Sciatic nerve (tissue), 2 donors: ENCODE measurements at regions of chr17 and their contacts with region 1.

Region 1: DNA sequence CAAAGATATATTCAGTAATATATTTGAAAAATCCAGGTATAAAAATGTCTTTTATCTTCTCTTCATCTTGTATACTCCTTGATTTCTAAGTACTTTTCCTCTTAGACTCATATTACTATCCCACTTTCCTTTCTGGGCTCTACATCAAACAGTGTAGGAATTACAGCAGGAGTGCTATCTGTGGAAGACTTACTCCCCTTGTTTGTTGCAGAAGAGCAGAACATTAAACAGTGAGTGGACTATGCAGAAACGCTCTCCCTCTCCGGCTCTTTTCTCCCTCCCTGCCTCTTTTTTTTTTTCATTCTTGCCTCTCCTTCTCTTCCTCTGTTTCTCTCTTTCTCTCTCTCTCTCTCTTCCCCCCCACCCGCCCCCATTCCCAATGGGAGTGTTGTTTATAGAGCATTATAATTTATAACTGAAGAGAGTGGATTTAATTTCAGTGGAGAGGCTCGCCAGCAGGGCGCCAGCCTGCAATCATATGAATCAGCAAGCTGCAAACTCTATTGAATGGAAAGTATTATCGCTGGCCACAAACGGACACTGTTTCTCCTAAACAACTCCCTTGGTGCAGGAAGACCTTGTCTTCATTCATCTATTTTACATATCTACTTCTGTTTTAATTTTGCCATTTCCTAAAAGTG is 242.3 kb upstream of the TBX2 start:
- DNase-seq: no peak
- ATAC-seq: peak; percentile 84

Region 2: DNA sequence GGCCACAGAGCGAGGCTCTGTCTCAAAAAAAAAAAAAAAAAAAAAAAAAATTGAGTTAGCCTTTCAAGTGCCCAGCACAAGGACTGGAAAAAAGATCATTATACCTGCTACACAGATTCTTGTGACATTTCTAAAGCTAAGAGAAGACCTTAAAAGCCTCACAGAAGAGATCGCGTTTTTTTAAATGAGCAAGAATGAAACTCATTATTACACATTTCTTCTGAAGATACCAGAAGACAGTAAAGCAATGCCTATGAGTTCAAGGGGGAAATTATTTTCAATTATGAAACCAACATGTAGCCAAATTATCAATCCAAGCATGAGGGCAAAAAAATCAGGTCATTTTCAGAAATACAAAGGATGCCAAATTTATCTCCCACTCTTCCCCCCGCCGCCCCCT is 850.9 kb after region 1 on chr17:
- intact Hi-C with region 1: loop called (anchors 5 kb)
- DNase-seq: no peak
- ATAC-seq: no peak